ENCODE measurements at regions of chr2 and their contacts with region 1.

Region 1: GRCh38 chr2:240143801-240144648 is 3.6 kb upstream of the OTOS start:
- DNase-seq: peak; percentile 84
- H3K4me3 Mint-ChIP-seq: no peak overlapping the region
- H3K27ac Mint-ChIP-seq: no peak overlapping the region
- H3K4me1 Mint-ChIP-seq: no peaks in the 10 kb centered on the region
- H3K27me3 Mint-ChIP-seq: peaks cover 5% of the 10 kb centered on the region

Region 2: GRCh38 chr2:239934571-239935171 is 209.4 kb before region 1 on chr2:
- CTCF ChIA-PET with region 1: interaction called, 4 read pairs
- POLR2A ChIA-PET with region 1: no interaction called
- intact Hi-C with region 1: loop called (anchors 2 kb)
- DNase-seq: peak; percentile 75
- H3K4me3 Mint-ChIP-seq: no peak overlapping the region
- H3K27ac Mint-ChIP-seq: no peak overlapping the region
- H3K4me1 Mint-ChIP-seq: peaks cover 8% of the 10 kb centered on the region
- H3K27me3 Mint-ChIP-seq: no peaks in the 10 kb centered on the region

Region 3: GRCh38 chr2:240021488-240022104 is 122.4 kb before region 1 on chr2:
- CTCF ChIA-PET with region 1: interaction called, 10 read pairs
- POLR2A ChIA-PET with region 1: interaction called, 3 read pairs
- intact Hi-C with region 1: no loop called
- DNase-seq: peak; percentile 76
- H3K4me3 Mint-ChIP-seq: no peak overlapping the region
- H3K27ac Mint-ChIP-seq: no peak overlapping the region
- H3K4me1 Mint-ChIP-seq: peaks cover 19% of the 10 kb centered on the region
- H3K27me3 Mint-ChIP-seq: no peaks in the 10 kb centered on the region

Region 4: GRCh38 chr2:240066487-240066886 is 77.5 kb before region 1 on chr2:
- CTCF ChIA-PET with region 1: interaction called, 172 read pairs
- POLR2A ChIA-PET with region 1: no interaction called
- intact Hi-C with region 1: loop called (anchors 1 kb)
- DNase-seq: no peak
- H3K4me3 Mint-ChIP-seq: no peak overlapping the region
- H3K27ac Mint-ChIP-seq: no peak overlapping the region
- H3K4me1 Mint-ChIP-seq: no peaks in the 10 kb centered on the region
- H3K27me3 Mint-ChIP-seq: peaks cover 12% of the 10 kb centered on the region

Measured in activated CD4-positive, alpha-beta memory T cell treated with anti-CD3 and anti-CD28 coated beads for 36 hours (primary cell).